Activated B cell treated with CpG ODN at 0.5 μM for 24 hours (primary cell): ENCODE measurements at regions of chr12 and their contacts with region 1.

Region 1: DNA sequence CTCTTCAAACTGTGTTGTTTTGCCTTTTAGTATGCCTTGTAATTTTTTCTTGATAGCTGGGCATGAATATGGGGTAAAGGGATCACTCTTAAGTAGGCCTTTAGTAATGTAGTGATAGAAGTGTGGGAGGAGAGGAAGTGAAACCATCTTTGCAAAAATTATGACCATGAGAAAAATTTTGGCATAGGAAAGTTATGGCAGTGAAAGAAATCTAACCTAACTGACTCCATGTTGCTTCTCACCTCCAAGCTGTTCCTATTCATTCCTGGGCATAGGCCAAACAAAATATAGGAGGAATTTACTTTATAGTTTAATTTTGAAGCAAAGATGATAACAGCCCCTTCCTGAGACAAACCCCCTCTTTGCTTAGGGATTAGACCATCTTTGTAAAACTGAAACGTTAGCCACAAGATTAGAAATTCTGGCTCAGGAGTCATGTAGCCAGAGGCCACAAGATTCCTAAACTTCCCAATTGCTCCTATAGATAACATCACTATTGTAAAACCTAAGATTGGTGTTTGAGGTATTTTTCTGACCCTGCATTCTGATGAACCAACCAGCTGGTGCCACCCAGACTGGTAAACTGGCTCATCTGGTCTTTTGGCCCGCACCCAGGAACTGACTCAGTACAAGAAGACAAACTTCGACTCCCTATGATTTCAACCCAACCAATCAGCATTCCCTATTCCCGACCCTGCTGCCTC is 45.8 kb downstream of the CRADD start:
- DNase-seq: no peak
- ATAC-seq: no peak
- H3K4me3 Mint-ChIP-seq: no peak overlapping the region
- H3K27ac Mint-ChIP-seq: no peak overlapping the region
- H3K4me1 Mint-ChIP-seq: peaks cover 7% of the 10 kb centered on the region
- H3K27me3 Mint-ChIP-seq: no peaks in the 10 kb centered on the region
- CTCF ChIP-seq: no peak

Region 2: DNA sequence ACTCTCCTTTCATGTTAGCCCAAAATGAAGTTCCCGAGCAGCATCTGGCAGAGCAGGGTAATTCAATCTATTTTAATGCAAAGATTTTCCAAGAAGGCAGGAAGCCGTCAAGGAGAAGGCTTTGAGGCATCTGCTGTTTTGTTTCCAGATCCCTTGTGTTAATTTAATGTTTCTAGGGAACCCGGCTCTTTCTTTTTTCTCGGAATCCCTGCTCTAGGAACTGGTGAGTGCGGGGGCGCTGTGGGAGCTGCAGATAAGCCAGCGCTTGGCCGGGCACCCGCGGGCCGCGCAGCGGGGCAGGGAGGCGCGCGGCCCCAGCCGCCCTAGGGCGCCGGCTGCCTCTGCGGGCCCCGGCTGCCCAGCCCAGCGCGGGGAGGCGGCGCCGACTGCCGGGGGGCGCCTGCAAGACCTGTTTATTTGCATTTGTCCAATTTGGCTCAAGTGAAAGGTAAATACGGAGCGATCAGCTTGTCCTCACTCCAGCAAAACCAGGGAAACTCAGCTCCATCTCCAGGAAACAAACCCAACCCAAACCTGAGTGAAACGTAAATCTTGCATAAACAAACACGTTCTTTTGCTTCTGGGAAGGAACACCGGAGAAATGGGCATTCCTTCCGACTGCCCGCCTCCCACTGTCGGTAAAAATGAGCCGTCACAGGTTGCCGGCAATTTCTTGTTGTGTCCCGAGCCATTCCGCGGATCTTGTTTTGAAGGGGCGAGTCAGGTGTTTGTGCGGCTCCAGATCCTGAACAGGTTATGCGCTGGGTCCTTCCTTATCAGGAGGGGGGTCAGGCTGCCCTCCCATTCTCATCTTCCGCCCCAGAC is 19.3 kb after region 1 on chr12:
- CTCF ChIA-PET with region 1: no interaction called
- POLR2A ChIA-PET with region 1: no interaction called
- intact Hi-C with region 1: loop called (anchors 2 kb)
- DNase-seq: peak; percentile 56
- ATAC-seq: peak; percentile 93
- H3K4me3 Mint-ChIP-seq: peak overlapping the region; percentile 87
- H3K27ac Mint-ChIP-seq: peak overlapping the region; percentile 84
- H3K4me1 Mint-ChIP-seq: peaks cover 41% of the 10 kb centered on the region
- H3K27me3 Mint-ChIP-seq: no peaks in the 10 kb centered on the region
- CTCF ChIP-seq: no peak